ENCODE measurements at regions of chr19 and their contacts with region 1.

Region 1: GRCh38 chr19:42433503-42434260 is 6.5 kb upstream of the LIPE start:
- DNase-seq: peak; percentile 84
- ATAC-seq: peak; percentile 79
- H3K4me3 Mint-ChIP-seq: no peak overlapping the region
- H3K27ac Mint-ChIP-seq: no peak overlapping the region
- H3K4me1 Mint-ChIP-seq: peaks cover 5% of the 10 kb centered on the region
- H3K27me3 Mint-ChIP-seq: no peaks in the 10 kb centered on the region

Region 2: DNA sequence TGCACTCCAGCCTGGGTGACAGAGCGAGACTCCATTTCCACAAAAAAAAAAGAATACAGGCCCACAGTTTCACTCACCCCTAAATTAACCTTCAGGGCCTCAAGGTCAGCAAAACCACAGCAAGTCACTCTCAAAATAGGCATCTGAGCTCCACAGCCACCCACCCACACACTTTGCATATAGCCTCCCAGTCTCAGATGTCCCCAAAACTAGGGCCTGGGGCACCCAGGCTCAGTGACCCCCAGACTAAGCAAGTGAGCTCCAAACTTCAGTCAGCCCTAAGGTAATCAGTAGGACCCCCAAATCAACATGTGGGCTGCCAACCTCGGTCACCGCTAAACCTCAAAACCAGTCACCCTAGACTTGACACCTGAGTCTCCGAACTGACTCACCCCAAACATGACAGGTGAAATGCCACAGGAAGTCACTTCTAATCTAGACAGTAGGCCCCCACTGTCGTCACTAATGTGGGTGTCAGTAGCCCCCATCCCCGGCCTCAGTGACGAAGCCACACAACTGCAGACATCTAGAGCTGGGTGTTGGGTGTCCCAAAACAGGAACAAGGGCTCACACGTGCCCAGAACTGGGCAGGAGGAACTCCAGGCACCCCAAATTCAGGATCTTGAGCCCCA is 488.4 kb before region 1 on chr19:
- CTCF ChIA-PET with region 1: no interaction called
- POLR2A ChIA-PET with region 1: no interaction called
- intact Hi-C with region 1: no loop called
- DNase-seq: peak; percentile 95
- ATAC-seq: peak; percentile 92
- H3K4me3 Mint-ChIP-seq: peak overlapping the region; percentile 41
- H3K27ac Mint-ChIP-seq: peak overlapping the region; percentile 96
- H3K4me1 Mint-ChIP-seq: peaks cover 50% of the 10 kb centered on the region
- H3K27me3 Mint-ChIP-seq: peaks cover 4% of the 10 kb centered on the region

Region 3: DNA sequence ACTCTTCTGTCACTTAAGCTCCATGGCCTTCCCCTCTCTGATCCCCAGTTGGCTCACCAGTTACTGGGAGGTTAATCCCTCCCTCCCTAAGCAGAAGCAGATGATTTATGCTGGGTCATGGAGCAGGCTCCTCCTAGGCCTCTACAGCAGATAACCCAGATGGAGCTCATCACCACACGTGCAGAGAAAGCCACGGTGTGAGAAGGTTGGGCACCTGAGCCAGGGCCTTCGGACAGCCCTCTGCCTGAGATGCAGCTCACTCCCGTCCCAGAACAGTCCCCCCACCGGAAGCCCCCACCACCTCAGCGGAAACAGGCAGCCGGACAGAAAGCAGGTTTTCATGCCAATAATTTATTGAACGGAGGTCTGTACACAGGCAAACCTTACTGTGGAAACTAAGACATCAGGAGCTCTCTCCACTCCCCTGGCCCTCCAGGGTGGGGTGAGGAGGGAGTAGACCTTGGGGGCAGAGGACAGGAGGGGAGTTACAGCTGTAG is 203.8 kb before region 1 on chr19:
- CTCF ChIA-PET with region 1: no interaction called
- POLR2A ChIA-PET with region 1: no interaction called
- intact Hi-C with region 1: no loop called
- DNase-seq: no peak
- ATAC-seq: no peak
- H3K4me3 Mint-ChIP-seq: no peak overlapping the region
- H3K27ac Mint-ChIP-seq: peak overlapping the region; percentile 75
- H3K4me1 Mint-ChIP-seq: peaks cover 19% of the 10 kb centered on the region
- H3K27me3 Mint-ChIP-seq: no peaks in the 10 kb centered on the region

Region 4: GRCh38 chr19:42386974-42387707 is 46.5 kb before region 1 on chr19:
- CTCF ChIA-PET with region 1: interaction called, 8 read pairs
- POLR2A ChIA-PET with region 1: no interaction called
- intact Hi-C with region 1: loop called (anchors 1 to 10 kb)
- DNase-seq: peak; percentile 81
- ATAC-seq: peak; percentile 98
- H3K4me3 Mint-ChIP-seq: peak overlapping the region; percentile 41
- H3K27ac Mint-ChIP-seq: no peak overlapping the region
- H3K4me1 Mint-ChIP-seq: peaks cover 4% of the 10 kb centered on the region
- H3K27me3 Mint-ChIP-seq: peaks cover 36% of the 10 kb centered on the region

Measured in activated CD4-positive, alpha-beta T cell treated with anti-CD3 and anti-CD28 coated beads for 36 hours (primary cell).